ENCODE measurements at regions of chr17 and their contacts with region 1.

Region 1: GRCh38 chr17:27455914-27456680 is at the start of gene KSR1:
- DNase-seq: peak; percentile 69 to 88 (median 76)
- ATAC-seq: peak; percentile 92 to 93
- H3K4me3 Mint-ChIP-seq: peak within 1 kb of the TSS; percentile 78 to 95 (median 88)
- H3K27ac Mint-ChIP-seq: peak within 1 kb of the TSS; percentile 68 to 93 (median 82)
- H3K4me1 Mint-ChIP-seq: peaks cover 11 to 33% (median 22%) of the 10 kb centered on the region in 4 donors
- H3K27me3 Mint-ChIP-seq: no peaks in the 10 kb centered on the region
- polyA plus RNA-seq, gene KSR1: 0.73 to 2.0 (median 0.91) TPM

Region 2: GRCh38 chr17:27466743-27467375 is 10.8 kb after region 1 on chr17:
- POLR2A ChIA-PET with region 1: interaction called, 10 read pairs
- DNase-seq: peak in 2 of 10 donors; percentile 7 to 31
- ATAC-seq: peak in 1 of 2 donors; percentile 65
- H3K4me3 Mint-ChIP-seq: peak overlapping the region in 7 of 10 donors; percentile 26 to 70 (median 47)
- H3K27ac Mint-ChIP-seq: peak overlapping the region in 7 of 10 donors; percentile 28 to 87 (median 60)
- H3K4me1 Mint-ChIP-seq: peaks cover 13 to 58% (median 50%) of the 10 kb centered on the region in 4 donors
- H3K27me3 Mint-ChIP-seq: no peaks in the 10 kb centered on the region